CD14-positive monocyte (primary cell): ENCODE measurements at regions of chr10 and their contacts with region 1.

Region 1: DNA sequence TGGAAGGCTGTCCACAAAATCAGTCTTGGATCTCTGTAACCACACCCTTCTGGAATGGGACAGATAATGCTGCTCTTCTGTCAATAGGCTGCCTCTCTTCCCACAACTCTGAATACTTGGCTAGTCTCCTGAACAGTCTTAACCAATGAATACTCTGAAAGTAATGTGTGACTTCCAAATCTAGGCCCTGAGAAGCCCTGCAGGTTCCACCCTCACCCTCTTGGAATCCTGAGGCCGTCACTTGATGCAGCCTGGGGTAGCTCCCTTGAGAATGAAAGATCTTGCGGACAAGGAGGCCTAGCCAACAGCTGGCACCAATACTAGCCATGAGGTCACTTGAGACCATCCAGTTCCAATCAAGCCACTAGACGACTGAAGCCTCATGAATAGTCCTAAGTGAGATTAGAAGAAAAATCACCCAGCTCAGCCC is 109.2 kb downstream of the ARHGAP12 start:
- DNase-seq: no peak
- H3K4me3 ChIP-seq: no peak overlapping the region
- H3K4me3 Mint-ChIP-seq: no peak overlapping the region
- H3K27ac ChIP-seq: no peak overlapping the region
- H3K27ac Mint-ChIP-seq: no peak overlapping the region
- H3K4me1 ChIP-seq: no peaks in the 10 kb centered on the region
- H3K4me1 Mint-ChIP-seq: no peaks in the 10 kb centered on the region
- H3K27me3 ChIP-seq: no peaks in the 10 kb centered on the region
- H3K27me3 Mint-ChIP-seq: no peaks in the 10 kb centered on the region
- CTCF ChIP-seq: no peak

Region 2: DNA sequence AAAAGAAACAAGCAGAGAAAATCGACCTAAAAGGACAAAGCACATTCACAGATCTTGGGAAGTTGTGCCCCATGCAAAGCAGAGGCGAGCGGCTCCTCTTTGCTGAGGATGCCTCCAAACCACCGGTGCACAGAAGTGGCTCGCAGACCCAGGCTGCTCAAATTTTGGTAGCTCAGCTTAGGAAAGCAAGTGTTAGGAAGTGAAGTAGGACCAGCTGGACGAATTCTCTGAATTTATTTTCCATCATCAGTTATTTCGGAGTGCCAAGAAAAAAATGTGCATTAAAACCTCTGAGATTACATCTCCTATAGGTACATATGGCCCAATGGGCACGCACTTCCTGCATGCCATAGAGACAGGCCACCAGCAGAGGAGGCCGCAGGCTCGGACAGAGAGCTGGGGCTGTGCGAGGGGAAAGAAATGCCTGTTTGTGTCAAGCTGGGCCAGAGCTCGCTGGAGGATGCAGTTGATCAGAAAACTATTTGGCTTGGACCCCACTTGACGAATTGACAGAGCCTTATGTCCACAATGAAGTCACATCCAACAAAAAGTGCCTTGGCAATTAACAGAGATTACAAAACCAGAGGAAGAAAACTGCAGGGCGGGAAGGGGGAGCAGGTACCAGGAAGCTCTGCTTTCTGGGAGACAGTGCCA is 1067.6 kb before region 1 on chr10:
- intact Hi-C with region 1: loop called in 1 of 2 experiments (anchors 10 kb)
- DNase-seq: no peak
- H3K4me3 ChIP-seq: no peak overlapping the region
- H3K4me3 Mint-ChIP-seq: no peak overlapping the region
- H3K27ac ChIP-seq: no peak overlapping the region
- H3K27ac Mint-ChIP-seq: no peak overlapping the region
- H3K4me1 ChIP-seq: no peaks in the 10 kb centered on the region
- H3K4me1 Mint-ChIP-seq: peaks cover 6% of the 10 kb centered on the region
- H3K27me3 ChIP-seq: no peaks in the 10 kb centered on the region
- H3K27me3 Mint-ChIP-seq: peaks cover 4 to 6% (median 5%) of the 10 kb centered on the region in 3 donors
- CTCF ChIP-seq: no peak

Region 3: GRCh38 chr10:31928549-31929260 is 109.3 kb after region 1 on chr10 and contains the start of gene ARHGAP12:
- intact Hi-C with region 1: no loop called
- DNase-seq: peak; percentile 65 to 82 (median 74)
- H3K4me3 ChIP-seq: peak within 1 kb of the TSS; percentile 82 to 94 (median 92)
- H3K4me3 Mint-ChIP-seq: peak within 1 kb of the TSS; percentile 91 to 95
- H3K27ac ChIP-seq: peak within 1 kb of the TSS; percentile 72 to 90
- H3K27ac Mint-ChIP-seq: peak within 1 kb of the TSS; percentile 86 to 93 (median 92)
- H3K4me1 ChIP-seq: peaks cover 28 to 38% of the 10 kb centered on the region in 2 donors
- H3K4me1 Mint-ChIP-seq: peaks cover 35% of the 10 kb centered on the region
- H3K27me3 ChIP-seq: no peaks in the 10 kb centered on the region
- H3K27me3 Mint-ChIP-seq: peaks cover 0 to 8% (median 4%) of the 10 kb centered on the region in 3 donors
- CTCF ChIP-seq: no peak
- polyA plus RNA-seq, gene ARHGAP12: 3.2 to 15.5 (median 4.7) TPM